ENCODE measurements at regions of chr1 and their contacts with region 1.

Region 1: DNA sequence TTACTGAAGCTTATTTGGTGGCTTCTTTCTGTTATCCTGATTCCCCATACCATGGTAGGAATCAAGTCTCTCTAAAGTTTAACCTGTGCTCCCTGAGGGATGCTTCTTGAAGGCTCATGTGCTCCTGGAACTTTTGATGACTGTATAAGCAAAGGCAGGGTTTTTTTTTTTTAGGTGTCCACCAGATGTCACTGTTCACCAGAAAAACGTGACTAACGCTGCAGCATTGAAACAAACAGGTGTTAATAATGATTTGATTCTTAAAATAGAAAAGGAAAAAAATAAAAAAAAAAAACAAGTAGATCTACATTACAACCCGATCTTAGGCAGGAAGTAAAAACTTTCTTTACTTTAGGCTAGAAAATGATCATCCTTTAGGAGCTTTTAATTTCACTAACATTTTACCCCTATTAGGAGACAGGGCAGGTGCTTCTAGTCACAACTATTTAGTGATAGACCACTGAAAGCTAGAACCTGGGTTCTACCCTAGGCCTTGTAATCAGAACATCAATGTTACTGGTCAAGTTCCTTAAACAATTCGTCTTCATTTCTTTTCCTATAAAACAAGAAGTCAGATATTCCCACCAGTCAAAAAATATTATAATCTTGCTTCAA is 223.0 kb downstream of the PLA2G4A start:
- DNase-seq: peak; percentile 82
- H3K4me3 Mint-ChIP-seq: no peak overlapping the region
- H3K27ac Mint-ChIP-seq: no peak overlapping the region
- H3K4me1 Mint-ChIP-seq: no peaks in the 10 kb centered on the region
- H3K27me3 Mint-ChIP-seq: no peaks in the 10 kb centered on the region
- CTCF ChIP-seq: peak; percentile 76

Region 2: DNA sequence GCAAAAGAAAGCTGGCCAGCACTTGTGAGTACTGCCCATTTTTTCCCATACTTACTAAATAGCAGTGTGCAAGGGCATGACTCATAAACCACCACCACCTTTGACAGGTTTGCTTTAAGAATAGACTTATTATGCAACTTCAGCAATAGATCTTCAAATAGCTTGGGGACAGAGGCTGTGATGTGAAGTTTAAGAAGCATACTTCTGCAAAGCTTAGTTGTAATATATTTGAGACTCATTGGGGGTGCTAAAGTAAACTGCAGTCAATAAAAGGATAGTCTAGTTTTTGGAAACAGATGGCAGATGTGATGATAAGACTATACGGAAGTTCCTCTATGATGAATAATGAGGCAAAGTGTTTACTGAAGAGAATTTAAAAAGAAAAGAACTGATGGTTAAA is 12.9 kb before region 1 on chr1:
- CTCF ChIA-PET with region 1: interaction called, 35 read pairs
- POLR2A ChIA-PET with region 1: no interaction called
- intact Hi-C with region 1: no loop called
- DNase-seq: peak; percentile 90
- H3K4me3 Mint-ChIP-seq: no peak overlapping the region
- H3K27ac Mint-ChIP-seq: no peak overlapping the region
- H3K4me1 Mint-ChIP-seq: peaks cover 7% of the 10 kb centered on the region
- H3K27me3 Mint-ChIP-seq: no peaks in the 10 kb centered on the region
- CTCF ChIP-seq: no peak

Region 3: GRCh38 chr1:187067160-187067559 is 15.4 kb after region 1 on chr1:
- CTCF ChIA-PET with region 1: interaction called, 33 read pairs
- POLR2A ChIA-PET with region 1: interaction called, 3 read pairs
- intact Hi-C with region 1: no loop called
- DNase-seq: peak; percentile 14
- H3K4me3 Mint-ChIP-seq: no peak overlapping the region
- H3K27ac Mint-ChIP-seq: no peak overlapping the region
- H3K4me1 Mint-ChIP-seq: no peaks in the 10 kb centered on the region
- H3K27me3 Mint-ChIP-seq: no peaks in the 10 kb centered on the region
- CTCF ChIP-seq: no peak

Region 4: GRCh38 chr1:187264995-187265602 is 213.4 kb after region 1 on chr1:
- CTCF ChIA-PET with region 1: interaction called, 7 read pairs
- POLR2A ChIA-PET with region 1: no interaction called
- intact Hi-C with region 1: loop called (anchors 1 kb)
- DNase-seq: peak; percentile 85
- H3K4me3 Mint-ChIP-seq: no peak overlapping the region
- H3K27ac Mint-ChIP-seq: no peak overlapping the region
- H3K4me1 Mint-ChIP-seq: peaks cover 11% of the 10 kb centered on the region
- H3K27me3 Mint-ChIP-seq: no peaks in the 10 kb centered on the region
- CTCF ChIP-seq: peak; percentile 84

Region 5: DNA sequence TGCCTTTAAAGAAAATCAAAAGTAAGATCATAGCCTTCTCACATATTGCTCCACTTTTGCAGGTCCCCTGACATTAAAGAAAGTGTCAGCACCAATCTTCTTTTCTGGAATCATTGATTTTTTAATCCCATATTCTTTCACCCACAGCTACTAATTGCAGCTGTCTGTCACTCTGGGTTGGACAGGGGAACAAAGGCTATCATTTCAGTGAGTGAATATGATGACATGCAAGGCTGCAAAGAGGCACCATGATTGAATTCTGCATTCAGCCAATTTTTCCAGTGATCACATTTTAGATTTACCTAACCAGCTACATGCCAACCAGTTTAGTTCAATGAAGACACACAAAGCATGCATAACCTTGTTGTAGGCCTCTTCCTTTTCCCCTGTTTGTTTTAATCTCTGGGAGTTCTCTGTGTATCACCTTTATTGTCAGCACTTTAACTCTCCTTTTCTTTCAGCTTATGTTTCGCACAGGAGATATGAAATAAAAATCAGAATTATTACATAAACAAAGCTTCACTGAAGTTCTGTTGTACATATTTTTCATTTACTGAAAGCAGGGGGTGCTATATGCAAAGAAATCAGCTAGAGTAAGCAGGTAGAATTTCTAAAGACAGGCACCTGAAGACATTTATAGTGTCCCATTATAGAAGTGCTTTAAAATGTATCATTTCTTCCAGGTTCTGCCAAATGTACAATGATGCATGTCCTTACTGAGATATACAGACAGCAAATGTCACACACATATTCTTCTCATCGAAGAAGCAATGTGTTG is 361.9 kb after region 1 on chr1:
- CTCF ChIA-PET with region 1: interaction called, 11 read pairs
- POLR2A ChIA-PET with region 1: no interaction called
- intact Hi-C with region 1: loop called (anchors 5 kb)
- DNase-seq: peak; percentile 45
- H3K4me3 Mint-ChIP-seq: no peak overlapping the region
- H3K27ac Mint-ChIP-seq: no peak overlapping the region
- H3K4me1 Mint-ChIP-seq: peaks cover 18% of the 10 kb centered on the region
- H3K27me3 Mint-ChIP-seq: no peaks in the 10 kb centered on the region
- CTCF ChIP-seq: peak; percentile 53

Region 6: DNA sequence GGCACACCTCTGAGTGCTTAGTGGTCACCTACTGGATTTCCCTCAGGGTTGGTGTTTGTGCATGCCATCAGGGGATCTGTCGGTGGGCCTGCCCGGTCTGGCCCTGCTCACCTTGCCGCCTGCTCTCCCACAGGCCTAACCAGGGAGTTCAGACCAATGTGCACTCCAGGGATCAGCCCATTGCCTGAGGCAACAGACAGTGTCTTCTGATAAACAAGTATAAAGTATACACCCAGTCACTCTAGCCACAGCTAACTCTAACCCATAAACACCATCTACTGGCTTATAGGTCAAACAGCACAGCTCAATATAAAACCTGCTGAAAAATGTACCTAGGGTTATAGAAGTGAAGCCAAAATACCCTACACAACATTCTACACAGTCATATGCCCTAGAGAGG is 1077.0 kb after region 1 on chr1:
- CTCF ChIA-PET with region 1: interaction called, 7 read pairs
- POLR2A ChIA-PET with region 1: interaction called, 3 read pairs
- intact Hi-C with region 1: loop called (anchors 10 kb)
- DNase-seq: peak; percentile 27
- H3K4me3 Mint-ChIP-seq: no peak overlapping the region
- H3K27ac Mint-ChIP-seq: no peak overlapping the region
- H3K4me1 Mint-ChIP-seq: no peaks in the 10 kb centered on the region
- H3K27me3 Mint-ChIP-seq: no peaks in the 10 kb centered on the region
- CTCF ChIP-seq: no peak

Region 7: GRCh38 chr1:188937965-188938551 is 1886.3 kb after region 1 on chr1:
- CTCF ChIA-PET with region 1: interaction called, 3 read pairs
- POLR2A ChIA-PET with region 1: no interaction called
- intact Hi-C with region 1: loop called (anchors 10 kb)
- DNase-seq: peak; percentile 43
- H3K4me3 Mint-ChIP-seq: no peak overlapping the region
- H3K27ac Mint-ChIP-seq: no peak overlapping the region
- H3K4me1 Mint-ChIP-seq: no peaks in the 10 kb centered on the region
- H3K27me3 Mint-ChIP-seq: no peaks in the 10 kb centered on the region
- CTCF ChIP-seq: peak; percentile 46

Measured in MCF 10A (cell line).